Caco-2 (cell line): ENCODE measurements at regions of chr5 and their contacts with region 1.

Region 1: DNA sequence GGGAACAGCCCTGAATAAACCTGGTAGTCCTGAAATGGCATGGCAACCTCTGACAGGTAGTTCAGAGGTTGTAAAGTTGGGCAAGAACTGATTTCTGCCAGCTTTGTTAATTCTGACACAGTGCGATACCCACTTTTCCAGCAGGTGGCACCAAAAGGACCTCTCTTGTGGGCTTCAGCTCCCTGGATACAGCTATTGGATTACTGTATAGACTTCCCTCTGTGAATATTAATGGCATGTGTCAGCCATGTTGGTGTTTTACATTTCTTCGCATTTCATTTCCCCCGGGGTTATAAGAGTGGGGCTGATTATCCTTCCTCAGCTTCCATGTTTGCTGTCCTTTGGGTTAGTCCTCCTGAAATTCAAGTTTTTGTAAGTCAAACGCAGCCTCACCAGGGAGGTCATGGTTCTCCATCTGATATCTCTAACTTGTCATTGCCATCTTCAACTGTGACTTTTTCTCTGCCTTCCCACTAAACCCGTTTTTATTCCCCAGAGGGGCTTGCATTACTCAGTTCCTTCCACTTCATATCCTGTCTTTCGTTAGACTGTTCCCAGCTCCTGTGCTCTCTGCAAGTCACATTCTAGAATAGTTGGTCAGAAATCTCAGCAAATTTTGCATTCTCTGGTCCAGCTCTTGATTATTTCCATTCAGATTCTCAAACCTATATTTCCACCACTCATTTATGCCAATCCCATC is 135.6 kb downstream of the LIFR start:
- DNase-seq: peak; percentile 65 to 74
- H3K4me3 ChIP-seq: no peak overlapping the region
- H3K4me3 Mint-ChIP-seq: no peak overlapping the region
- H3K27ac Mint-ChIP-seq: no peak overlapping the region
- H3K4me1 ChIP-seq: no peaks in the 10 kb centered on the region
- H3K4me1 Mint-ChIP-seq: no peaks in the 10 kb centered on the region
- H3K27me3 ChIP-seq: no peaks in the 10 kb centered on the region
- H3K27me3 Mint-ChIP-seq: no peaks in the 10 kb centered on the region
- CTCF ChIP-seq: peak; percentile 69 to 79

Region 2: GRCh38 chr5:38051711-38052511 is 368.9 kb before region 1 on chr5:
- CTCF ChIA-PET with region 1: no interaction called
- POLR2A ChIA-PET with region 1: no interaction called
- intact Hi-C with region 1: no loop called
- DNase-seq: no peak
- H3K4me3 ChIP-seq: no peak overlapping the region
- H3K4me3 Mint-ChIP-seq: no peak overlapping the region
- H3K27ac Mint-ChIP-seq: no peak overlapping the region
- H3K4me1 ChIP-seq: no peaks in the 10 kb centered on the region
- H3K4me1 Mint-ChIP-seq: no peaks in the 10 kb centered on the region
- H3K27me3 ChIP-seq: no peaks in the 10 kb centered on the region
- H3K27me3 Mint-ChIP-seq: no peaks in the 10 kb centered on the region
- CTCF ChIP-seq: no peak

Region 3: GRCh38 chr5:38382898-38383297 is 37.9 kb before region 1 on chr5:
- CTCF ChIA-PET with region 1: interaction called, 10 read pairs
- POLR2A ChIA-PET with region 1: no interaction called
- intact Hi-C with region 1: no loop called
- DNase-seq: peak; percentile 81 to 83
- H3K4me3 ChIP-seq: no peak overlapping the region
- H3K4me3 Mint-ChIP-seq: no peak overlapping the region
- H3K27ac Mint-ChIP-seq: no peak overlapping the region
- H3K4me1 ChIP-seq: no peaks in the 10 kb centered on the region
- H3K4me1 Mint-ChIP-seq: peaks cover 8% of the 10 kb centered on the region
- H3K27me3 ChIP-seq: no peaks in the 10 kb centered on the region
- H3K27me3 Mint-ChIP-seq: peaks cover 5% of the 10 kb centered on the region
- CTCF ChIP-seq: peak; percentile 70 to 84

Region 4: GRCh38 chr5:38497946-38498345 is 77.1 kb after region 1 on chr5:
- CTCF ChIA-PET with region 1: no interaction called
- POLR2A ChIA-PET with region 1: no interaction called
- intact Hi-C with region 1: no loop called
- DNase-seq: peak in 1 of 2 experiments; percentile 35
- H3K4me3 ChIP-seq: no peak overlapping the region
- H3K4me3 Mint-ChIP-seq: no peak overlapping the region
- H3K27ac Mint-ChIP-seq: no peak overlapping the region
- H3K4me1 ChIP-seq: peaks cover 7% of the 10 kb centered on the region; the same call in 1 of the 2 replicates
- H3K4me1 Mint-ChIP-seq: peaks cover 6% of the 10 kb centered on the region
- H3K27me3 ChIP-seq: no peaks in the 10 kb centered on the region
- H3K27me3 Mint-ChIP-seq: no peaks in the 10 kb centered on the region
- CTCF ChIP-seq: peak; percentile 11 to 52